GM10248 (cell line): ENCODE measurements at regions of chr14 and their contacts with region 1.

Region 1: GRCh38 chr14:95361373-95362137 is 41.8 kb upstream of the CLMN start:
- DNase-seq: peak; percentile 74
- CTCF ChIP-seq: peak; percentile 63

Region 2: GRCh38 chr14:95307402-95308062 is 54.0 kb before region 1 on chr14:
- CTCF ChIA-PET with region 1: no interaction called
- POLR2A ChIA-PET with region 1: no interaction called
- DNase-seq: no peak
- CTCF ChIP-seq: no peak

Region 3: GRCh38 chr14:95327558-95328374 is 33.8 kb before region 1 on chr14:
- CTCF ChIA-PET with region 1: interaction called, 13 read pairs
- POLR2A ChIA-PET with region 1: no interaction called
- DNase-seq: peak; percentile 82
- CTCF ChIP-seq: no peak

Region 4: GRCh38 chr14:95374239-95374997 is 12.9 kb after region 1 on chr14:
- CTCF ChIA-PET with region 1: interaction called, 16 read pairs
- POLR2A ChIA-PET with region 1: no interaction called
- DNase-seq: no peak
- CTCF ChIP-seq: no peak